Activated naive CD4-positive, alpha-beta T cell treated with anti-CD3 and anti-CD28 coated beads for 36 hours (primary cell): ENCODE measurements at regions of chr2 and their contacts with region 1.

Region 1: GRCh38 chr2:24971536-24972314 is at the start of gene DNAJC27:
- DNase-seq: peak; percentile 98
- H3K4me3 Mint-ChIP-seq: peak within 1 kb of the TSS; percentile 99
- H3K27ac Mint-ChIP-seq: peak within 1 kb of the TSS; percentile 100
- H3K4me1 Mint-ChIP-seq: peaks cover 20% of the 10 kb centered on the region
- H3K27me3 Mint-ChIP-seq: no peaks in the 10 kb centered on the region
- total RNA-seq, gene DNAJC27: 5.3 to 6.0 TPM

Region 2: GRCh38 chr2:24075915-24076848 is 895.5 kb before region 1 on chr2 and contains the start of gene SF3B6:
- CTCF ChIA-PET with region 1: no interaction called
- intact Hi-C with region 1: loop called (anchors 1 kb)
- DNase-seq: peak; percentile 100
- H3K4me3 Mint-ChIP-seq: peak within 1 kb of the TSS; percentile 97
- H3K27ac Mint-ChIP-seq: peak within 1 kb of the TSS; percentile 93
- H3K4me1 Mint-ChIP-seq: peaks cover 36% of the 10 kb centered on the region
- H3K27me3 Mint-ChIP-seq: no peaks in the 10 kb centered on the region
- total RNA-seq, gene SF3B6: 151 to 164 TPM

Region 3: GRCh38 chr2:24792874-24793760 is 178.6 kb before region 1 on chr2 and contains the starts of genes CENPO and PTRHD1:
- CTCF ChIA-PET with region 1: no interaction called
- intact Hi-C with region 1: loop called (anchors 1 kb)
- DNase-seq: peak; percentile 97
- H3K4me3 Mint-ChIP-seq: peak within 1 kb of the TSS; percentile 97
- H3K27ac Mint-ChIP-seq: peak within 1 kb of the TSS; percentile 99
- H3K4me1 Mint-ChIP-seq: peaks cover 40% of the 10 kb centered on the region
- H3K27me3 Mint-ChIP-seq: no peaks in the 10 kb centered on the region
- total RNA-seq, gene CENPO: 36.4 to 38.5 TPM
- total RNA-seq, gene PTRHD1: 21.7 to 23.5 TPM

Region 4: GRCh38 chr2:24935145-24935544 is 36.6 kb before region 1 on chr2:
- CTCF ChIA-PET with region 1: no interaction called
- intact Hi-C with region 1: no loop called
- DNase-seq: no peak
- H3K4me3 Mint-ChIP-seq: no peak overlapping the region
- H3K27ac Mint-ChIP-seq: no peak overlapping the region
- H3K4me1 Mint-ChIP-seq: peaks cover 6% of the 10 kb centered on the region
- H3K27me3 Mint-ChIP-seq: no peaks in the 10 kb centered on the region

Region 5: GRCh38 chr2:25041928-25042320 is 70.2 kb after region 1 on chr2 and contains the start of gene EFR3B:
- CTCF ChIA-PET with region 1: interaction called, 8 read pairs
- intact Hi-C with region 1: loop called (anchors 1 kb)
- DNase-seq: peak; percentile 92
- H3K4me3 Mint-ChIP-seq: peak within 1 kb of the TSS; percentile 77
- H3K27ac Mint-ChIP-seq: no peak within 1 kb of the TSS
- H3K4me1 Mint-ChIP-seq: peaks cover 29% of the 10 kb centered on the region
- H3K27me3 Mint-ChIP-seq: peaks cover 36% of the 10 kb centered on the region
- total RNA-seq, gene EFR3B: 0.41 to 0.42 TPM

Region 6: GRCh38 chr2:25145803-25146202 is 174.1 kb after region 1 on chr2:
- CTCF ChIA-PET with region 1: no interaction called
- intact Hi-C with region 1: no loop called
- DNase-seq: no peak
- H3K4me3 Mint-ChIP-seq: no peak overlapping the region
- H3K27ac Mint-ChIP-seq: no peak overlapping the region
- H3K4me1 Mint-ChIP-seq: peaks cover 4% of the 10 kb centered on the region
- H3K27me3 Mint-ChIP-seq: peaks cover 5% of the 10 kb centered on the region

Region 7: DNA sequence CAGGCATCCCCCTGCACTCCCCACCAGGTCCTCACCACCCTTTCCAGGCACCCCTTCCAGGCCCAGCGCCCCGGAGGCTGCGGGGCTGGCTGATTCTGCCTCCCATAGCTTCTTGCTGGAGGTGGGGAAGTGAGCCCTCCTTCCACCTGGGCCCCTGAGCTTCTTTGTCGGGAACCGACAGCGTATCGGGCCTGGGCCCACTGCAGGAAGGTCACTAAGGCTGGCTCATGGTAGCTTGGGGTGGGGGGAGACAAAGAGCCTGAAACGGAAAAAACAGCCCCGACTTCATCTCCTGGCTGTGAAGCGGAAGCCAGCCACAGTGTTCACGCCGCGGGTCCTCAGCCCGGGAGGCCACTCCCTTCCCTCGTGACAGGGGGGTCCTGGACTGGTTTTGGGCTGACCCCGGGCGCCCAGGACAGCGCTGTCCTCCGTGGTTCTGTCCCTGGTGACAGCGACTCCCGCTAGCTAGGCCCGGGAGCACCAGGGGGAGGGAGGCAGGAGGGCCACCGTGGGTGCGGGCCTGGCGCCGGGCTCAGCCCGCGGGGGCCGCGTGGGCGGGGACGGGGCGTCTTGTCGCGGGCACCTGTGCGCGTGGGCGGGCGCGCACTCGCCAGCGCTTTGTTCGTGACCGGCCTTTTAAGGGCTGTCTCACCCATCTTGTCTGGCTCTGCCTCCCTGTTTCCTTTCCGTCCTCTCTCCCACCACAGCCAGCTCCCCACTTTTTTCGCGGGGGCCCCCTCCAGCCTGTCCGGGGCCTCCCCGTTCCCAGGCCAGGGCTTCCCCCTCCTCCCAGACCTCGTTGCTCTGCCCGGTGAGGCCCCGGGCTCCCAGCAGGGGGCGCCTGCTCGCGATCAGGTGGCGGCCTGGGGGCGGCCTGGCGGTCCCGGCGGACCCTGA is 305.1 kb after region 1 on chr2:
- CTCF ChIA-PET with region 1: no interaction called
- intact Hi-C with region 1: loop called (anchors 2 kb)
- DNase-seq: peak; percentile 88
- H3K4me3 Mint-ChIP-seq: peak overlapping the region; percentile 55
- H3K27ac Mint-ChIP-seq: peak overlapping the region; percentile 94
- H3K4me1 Mint-ChIP-seq: peaks cover 83% of the 10 kb centered on the region
- H3K27me3 Mint-ChIP-seq: no peaks in the 10 kb centered on the region

Region 8: DNA sequence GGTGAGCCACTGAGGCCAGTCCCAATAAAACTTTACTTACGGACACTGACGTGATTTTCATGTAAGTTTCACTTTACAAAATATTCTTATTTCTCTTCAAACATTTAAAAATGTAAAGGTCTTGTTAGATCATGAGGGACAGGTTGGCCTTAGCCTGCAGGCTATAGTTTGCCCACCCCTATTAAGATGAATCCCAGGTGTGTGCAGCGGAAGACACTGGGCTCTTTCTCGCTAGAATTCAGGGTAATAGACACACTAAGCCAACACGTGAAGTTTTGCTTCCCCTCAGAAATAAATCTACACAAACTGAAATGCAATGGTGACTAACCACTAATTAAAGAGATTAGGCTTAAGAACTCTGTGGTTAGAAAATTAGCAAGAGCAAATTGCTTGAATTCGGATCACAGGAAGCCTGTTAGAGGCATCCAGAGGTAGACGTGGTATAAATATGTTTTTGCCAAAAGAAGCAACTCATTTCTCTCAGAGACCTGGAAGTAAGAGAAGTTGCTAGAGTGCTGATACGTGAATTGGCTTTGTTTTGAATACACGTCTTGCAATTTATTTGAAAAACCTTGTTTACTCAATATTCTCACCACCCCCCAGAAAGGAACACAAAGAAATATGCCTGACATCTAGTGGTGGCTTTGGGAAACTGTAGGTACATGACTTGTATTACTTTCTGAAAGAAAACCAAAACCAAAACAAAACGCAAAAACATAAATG is 550.1 kb after region 1 on chr2:
- CTCF ChIA-PET with region 1: no interaction called
- intact Hi-C with region 1: loop called (anchors 5 kb)
- DNase-seq: peak; percentile 53
- H3K4me3 Mint-ChIP-seq: peak overlapping the region; percentile 11
- H3K27ac Mint-ChIP-seq: peak overlapping the region; percentile 64
- H3K4me1 Mint-ChIP-seq: peaks cover 8% of the 10 kb centered on the region
- H3K27me3 Mint-ChIP-seq: no peaks in the 10 kb centered on the region